Activated naive CD4-positive, alpha-beta T cell treated with anti-CD3 and anti-CD28 coated beads for 36 hours (primary cell): ENCODE measurements at regions of chr3 and their contacts with region 1.

Region 1: GRCh38 chr3:113696658-113697499 is 437 bp upstream of the USF3 start:
- DNase-seq: peak; percentile 99
- H3K4me3 Mint-ChIP-seq: no peak overlapping the region
- H3K27ac Mint-ChIP-seq: no peak overlapping the region
- H3K4me1 Mint-ChIP-seq: peaks cover 25% of the 10 kb centered on the region
- H3K27me3 Mint-ChIP-seq: no peaks in the 10 kb centered on the region

Region 2: DNA sequence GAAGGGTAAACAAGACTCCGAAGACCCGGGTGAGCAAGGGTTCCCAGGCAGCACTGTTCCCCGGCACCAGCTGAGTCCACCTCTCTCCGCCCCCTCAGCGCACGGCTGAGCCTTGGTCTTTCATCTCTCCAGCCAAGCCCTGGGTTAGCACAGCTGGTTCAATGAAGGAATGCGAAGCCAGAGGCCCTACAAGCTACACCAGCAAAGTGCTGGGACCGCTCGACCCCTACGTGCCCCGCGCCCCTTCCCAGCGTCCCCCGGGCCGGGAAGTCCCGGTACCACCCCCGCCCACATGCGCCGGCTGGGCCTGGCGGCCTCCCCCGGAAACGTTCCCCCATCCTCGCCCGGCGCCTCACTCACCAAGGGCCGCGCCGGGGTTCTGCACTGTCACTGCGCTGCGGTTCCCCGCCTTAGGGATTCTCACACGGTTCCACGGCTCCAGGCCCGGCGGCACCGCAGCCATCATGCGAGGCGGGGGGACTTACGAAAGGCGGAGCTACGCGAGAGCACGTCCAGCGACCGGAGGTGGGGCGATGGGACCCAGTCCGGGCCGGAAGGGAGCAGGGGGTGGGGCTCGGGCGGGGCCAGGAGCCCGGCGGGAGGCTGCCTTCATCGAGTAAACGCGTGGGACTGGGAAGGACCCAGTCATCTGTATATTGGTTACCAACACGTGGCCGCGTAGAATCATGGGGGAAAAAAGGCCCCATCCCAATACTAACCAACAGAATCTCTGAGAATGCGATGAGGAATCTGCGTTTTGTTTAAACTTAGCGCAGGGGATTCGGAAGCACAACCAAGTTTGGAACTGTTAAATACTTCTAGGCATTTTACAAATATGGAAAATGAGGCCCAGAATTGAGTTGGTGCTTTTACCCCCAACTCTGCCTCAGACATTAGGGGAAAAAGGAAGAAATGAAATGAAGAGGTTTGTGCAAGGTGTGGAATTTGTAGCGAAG is 677.4 kb before region 1 on chr3:
- CTCF ChIA-PET with region 1: no interaction called
- intact Hi-C with region 1: loop called (anchors 1 kb)
- DNase-seq: peak; percentile 94
- H3K4me3 Mint-ChIP-seq: peak overlapping the region; percentile 94
- H3K27ac Mint-ChIP-seq: peak overlapping the region; percentile 99
- H3K4me1 Mint-ChIP-seq: peaks cover 64% of the 10 kb centered on the region
- H3K27me3 Mint-ChIP-seq: no peaks in the 10 kb centered on the region

Region 3: DNA sequence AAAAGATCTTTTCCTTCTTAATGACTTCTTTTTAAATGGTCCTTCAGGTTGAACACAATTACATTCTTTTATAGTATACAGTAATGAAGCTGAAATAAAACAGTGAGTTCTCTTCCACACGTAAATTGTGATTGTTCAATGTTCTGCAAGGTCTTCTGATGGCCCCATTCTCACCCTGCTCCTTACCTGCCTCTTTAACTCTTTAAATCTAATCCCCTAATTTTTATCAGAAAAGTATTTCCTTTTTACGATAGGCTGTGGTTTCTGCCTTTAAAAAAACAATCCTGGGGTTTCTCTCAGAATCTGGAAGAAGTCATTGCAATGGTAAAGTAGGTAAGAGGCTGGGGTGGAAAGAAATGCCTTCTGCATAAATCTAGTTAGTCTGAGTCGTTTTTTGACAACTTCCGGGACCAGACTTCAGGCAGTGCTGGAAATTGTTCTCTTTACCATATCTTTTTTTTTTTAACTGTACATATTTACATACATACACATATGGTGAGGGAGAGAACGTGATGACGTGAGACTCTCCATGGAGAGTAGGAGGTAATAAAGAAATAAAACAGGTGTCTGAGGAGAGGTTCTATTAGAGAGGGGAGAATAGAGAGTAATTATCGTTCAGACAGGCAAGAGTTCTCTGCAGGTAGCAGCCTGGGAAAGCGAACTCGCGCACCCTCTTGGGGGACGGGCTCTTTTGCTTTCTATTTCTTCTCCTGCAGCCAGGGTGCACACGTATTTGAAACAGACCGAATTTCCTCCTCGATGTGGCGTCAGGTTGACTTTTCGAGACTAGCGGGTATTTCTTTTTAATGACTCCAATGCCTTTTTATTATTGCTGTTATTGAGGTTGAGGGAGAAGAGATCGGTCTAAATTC is 164.8 kb before region 1 on chr3 and contains the start of gene SIDT1:
- CTCF ChIA-PET with region 1: interaction called, 3 read pairs
- intact Hi-C with region 1: loop called (anchors 1 kb)
- DNase-seq: peak; percentile 82
- H3K4me3 Mint-ChIP-seq: peak within 1 kb of the TSS; percentile 97
- H3K27ac Mint-ChIP-seq: peak within 1 kb of the TSS; percentile 96
- H3K4me1 Mint-ChIP-seq: peaks cover 46% of the 10 kb centered on the region
- H3K27me3 Mint-ChIP-seq: no peaks in the 10 kb centered on the region
- total RNA-seq, gene SIDT1: 14.6 to 14.9 TPM

Region 4: DNA sequence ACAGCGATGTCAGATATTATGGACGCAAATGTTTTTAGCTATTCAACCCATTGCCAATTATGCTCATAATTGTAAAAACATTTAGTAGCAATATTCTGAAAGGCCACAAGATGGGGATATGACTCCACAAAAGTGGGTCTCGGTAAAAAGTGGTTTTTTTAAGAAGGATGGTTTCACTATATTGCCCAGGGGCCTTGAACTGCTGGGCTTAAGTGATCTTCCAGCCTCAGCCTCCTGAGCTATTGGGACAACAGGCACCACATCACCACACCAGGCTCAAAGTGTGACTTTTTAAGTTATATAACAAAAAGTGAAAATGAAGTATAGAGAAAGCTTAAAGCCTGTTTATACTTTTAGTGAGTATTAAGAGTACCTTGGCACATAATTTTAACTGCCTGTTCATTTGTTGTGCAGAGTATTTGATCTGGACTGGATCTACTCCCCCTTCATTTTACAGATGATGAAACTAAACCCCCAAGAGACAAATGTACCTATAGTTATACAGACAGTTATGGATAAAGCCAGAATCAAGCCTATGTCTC is 39.7 kb after region 1 on chr3:
- CTCF ChIA-PET with region 1: interaction called, 5 read pairs
- intact Hi-C with region 1: loop called (anchors 2 kb)
- DNase-seq: no peak
- H3K4me3 Mint-ChIP-seq: no peak overlapping the region
- H3K27ac Mint-ChIP-seq: peak overlapping the region; percentile 56
- H3K4me1 Mint-ChIP-seq: peaks cover 65% of the 10 kb centered on the region
- H3K27me3 Mint-ChIP-seq: no peaks in the 10 kb centered on the region

Region 5: GRCh38 chr3:113912552-113913236 is 215.8 kb after region 1 on chr3:
- CTCF ChIA-PET with region 1: no interaction called
- intact Hi-C with region 1: loop called (anchors 1 kb)
- DNase-seq: peak; percentile 55
- H3K4me3 Mint-ChIP-seq: no peak overlapping the region
- H3K27ac Mint-ChIP-seq: no peak overlapping the region
- H3K4me1 Mint-ChIP-seq: peaks cover 3% of the 10 kb centered on the region
- H3K27me3 Mint-ChIP-seq: no peaks in the 10 kb centered on the region

Region 6: DNA sequence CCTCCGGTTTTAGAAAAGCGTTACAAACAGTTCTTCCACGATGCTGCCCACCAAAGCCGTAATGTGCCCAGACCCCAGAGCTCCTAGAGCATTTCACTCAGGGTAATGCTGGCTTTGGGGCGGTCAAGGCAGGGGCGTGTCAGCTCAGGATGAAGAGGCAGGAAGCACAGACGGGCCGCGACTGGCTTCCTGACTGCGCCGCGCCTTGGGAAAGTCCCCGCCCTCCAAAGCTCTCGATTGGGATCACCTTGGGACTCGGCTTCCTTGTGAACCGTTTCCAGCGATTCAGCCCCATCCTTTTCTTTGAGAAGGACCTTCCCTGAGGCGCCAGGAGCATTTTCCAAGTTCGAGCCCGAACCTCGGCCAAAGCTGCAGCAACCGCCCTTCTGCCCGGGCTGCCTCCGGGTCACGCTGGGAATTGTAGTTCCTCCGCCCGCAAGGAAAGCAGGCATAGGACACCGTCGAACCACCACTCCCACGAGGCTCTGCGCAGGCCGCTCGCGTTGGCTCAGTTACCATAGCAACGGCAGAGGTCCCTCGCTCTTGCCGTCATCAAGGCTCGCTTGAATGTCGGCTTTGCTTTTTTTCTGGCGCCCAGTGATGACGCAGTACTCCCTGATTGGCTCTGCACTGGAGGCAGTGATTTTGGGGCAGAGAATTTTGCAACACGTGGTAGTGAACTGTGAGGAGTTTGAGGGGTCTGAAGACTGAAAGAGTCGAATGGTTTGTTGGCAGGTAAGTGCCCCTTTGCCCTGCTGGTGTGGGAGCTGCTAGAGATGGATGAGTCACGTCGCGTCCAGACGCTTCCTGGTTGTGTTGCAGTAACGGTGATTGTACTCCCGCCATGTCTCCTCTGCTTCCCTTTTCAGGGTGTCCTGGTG is 359.5 kb after region 1 on chr3 and contains the starts of genes CCDC191 and QTRT2:
- CTCF ChIA-PET with region 1: no interaction called
- intact Hi-C with region 1: loop called (anchors 1 kb)
- DNase-seq: peak; percentile 100
- H3K4me3 Mint-ChIP-seq: peak within 1 kb of the TSS; percentile 97
- H3K27ac Mint-ChIP-seq: peak within 1 kb of the TSS; percentile 95
- H3K4me1 Mint-ChIP-seq: peaks cover 36% of the 10 kb centered on the region
- H3K27me3 Mint-ChIP-seq: no peaks in the 10 kb centered on the region
- total RNA-seq, gene CCDC191: 1.8 to 2.0 TPM
- total RNA-seq, gene QTRT2: 23.0 to 27.8 TPM